HepG2 (cell line): ENCODE measurements at regions of chrX and their contacts with region 1.

Region 1: DNA sequence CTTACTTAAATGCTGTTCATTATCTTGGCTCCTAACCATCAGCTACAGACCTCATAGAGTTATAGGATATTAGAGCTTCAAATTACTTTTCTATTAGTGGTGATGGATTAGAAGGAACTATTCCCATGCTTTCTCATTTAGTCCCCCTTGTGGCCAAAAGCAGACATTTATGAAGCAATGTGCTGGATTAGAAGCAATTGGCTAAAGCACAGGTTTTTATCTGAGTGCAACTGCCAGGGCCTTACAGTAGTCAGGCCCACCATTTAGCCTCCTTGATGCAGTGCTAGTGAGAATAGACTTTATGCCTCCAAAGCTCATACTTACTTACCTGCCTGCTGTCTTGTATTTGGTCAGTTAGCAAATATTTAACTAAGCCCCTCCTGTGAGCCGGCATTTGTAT is 93.0 kb downstream of the TSPAN7 start:
- DNase-seq: peak; percentile 36
- ATAC-seq: peak; percentile 80
- H3K4me3 ChIP-seq: no peak overlapping the region
- H3K27ac ChIP-seq: no peak overlapping the region
- H3K4me1 ChIP-seq: peaks cover 40% of the 10 kb centered on the region
- H3K27me3 ChIP-seq: no peaks in the 10 kb centered on the region
- CTCF ChIP-seq: peak; percentile 15; the same call in 1 of the 2 replicates
- EP300 ChIP-seq: no peak
- POLR2A ChIP-seq: no peak
- RAD21 ChIP-seq: no peak

Region 2: GRCh38 chrX:38627683-38628082 is 26.6 kb before region 1 on chrX:
- CTCF ChIA-PET with region 1: interaction called, 3 read pairs
- POLR2A ChIA-PET with region 1: no interaction called
- in situ Hi-C with region 1: no loop called
- intact Hi-C with region 1: loop called (anchors 1 kb)
- DNase-seq: peak; percentile 45
- ATAC-seq: peak; percentile 99
- H3K4me3 ChIP-seq: no peak overlapping the region
- H3K27ac ChIP-seq: no peak overlapping the region
- H3K4me1 ChIP-seq: no peaks in the 10 kb centered on the region
- H3K27me3 ChIP-seq: no peaks in the 10 kb centered on the region
- CTCF ChIP-seq: peak; percentile 74
- EP300 ChIP-seq: no peak
- POLR2A ChIP-seq: no peak
- RAD21 ChIP-seq: peak; percentile 53

Region 3: DNA sequence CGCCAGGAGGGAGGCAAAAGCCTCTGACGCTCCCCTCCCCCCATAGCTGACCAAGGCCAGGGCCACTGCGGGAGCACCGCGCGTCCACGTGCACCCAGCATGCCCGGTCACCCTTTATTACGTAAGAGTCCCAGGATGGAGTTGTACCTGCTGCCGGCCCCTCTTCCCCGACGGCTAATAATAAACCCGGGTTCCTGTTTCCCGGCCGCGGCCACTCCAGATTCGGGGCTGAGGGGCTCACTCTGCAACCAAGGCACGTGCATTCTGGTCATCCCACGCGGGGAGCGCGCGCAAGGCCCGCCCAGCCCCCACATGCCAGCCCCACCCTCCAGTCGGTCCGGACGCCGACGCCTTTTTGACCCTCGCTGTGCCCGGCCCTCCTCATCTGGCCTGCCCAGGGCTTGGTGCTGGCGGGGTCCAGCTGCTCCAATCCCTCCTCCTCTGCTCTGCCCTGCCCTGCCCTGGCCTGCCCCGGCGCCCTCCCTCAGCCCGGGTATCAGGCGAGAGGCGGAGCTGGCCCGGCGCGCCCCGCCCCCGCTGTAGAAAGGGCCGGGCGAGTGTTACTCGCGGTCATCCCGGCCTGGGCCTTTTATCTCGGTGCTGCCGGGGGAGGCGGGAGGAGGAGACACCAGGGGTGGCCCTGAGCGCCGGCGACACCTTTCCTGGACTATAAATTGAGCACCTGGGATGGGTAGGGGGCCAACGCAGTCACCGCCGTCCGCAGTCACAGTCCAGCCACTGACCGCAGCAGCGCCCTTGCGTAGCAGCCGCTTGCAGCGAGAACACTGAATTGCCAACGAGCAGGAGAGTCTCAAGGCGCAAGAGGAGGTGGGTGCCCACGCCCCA is 149.5 kb after region 1 on chrX:
- CTCF ChIA-PET with region 1: no interaction called
- POLR2A ChIA-PET with region 1: no interaction called
- in situ Hi-C with region 1: no loop called
- intact Hi-C with region 1: no loop called
- DNase-seq: peak; percentile 72
- ATAC-seq: peak; percentile 88
- H3K4me3 ChIP-seq: peak overlapping the region; percentile 57 to 87 (median 84); a peak in 5 of 6 replicates
- H3K27ac ChIP-seq: peak overlapping the region; percentile 95
- H3K4me1 ChIP-seq: peaks cover 38% of the 10 kb centered on the region
- H3K27me3 ChIP-seq: no peaks in the 10 kb centered on the region; a peak in 1 of 5 replicates
- CTCF ChIP-seq: no peak
- EP300 ChIP-seq: peak; percentile 57 to 80; a peak in 2 of 4 replicates
- POLR2A ChIP-seq: peak in 1 of 2 experiments; percentile 96; a peak in 2 of 4 replicates
- RAD21 ChIP-seq: peak; percentile 38; the same call in 1 of the 2 replicates

Region 4: DNA sequence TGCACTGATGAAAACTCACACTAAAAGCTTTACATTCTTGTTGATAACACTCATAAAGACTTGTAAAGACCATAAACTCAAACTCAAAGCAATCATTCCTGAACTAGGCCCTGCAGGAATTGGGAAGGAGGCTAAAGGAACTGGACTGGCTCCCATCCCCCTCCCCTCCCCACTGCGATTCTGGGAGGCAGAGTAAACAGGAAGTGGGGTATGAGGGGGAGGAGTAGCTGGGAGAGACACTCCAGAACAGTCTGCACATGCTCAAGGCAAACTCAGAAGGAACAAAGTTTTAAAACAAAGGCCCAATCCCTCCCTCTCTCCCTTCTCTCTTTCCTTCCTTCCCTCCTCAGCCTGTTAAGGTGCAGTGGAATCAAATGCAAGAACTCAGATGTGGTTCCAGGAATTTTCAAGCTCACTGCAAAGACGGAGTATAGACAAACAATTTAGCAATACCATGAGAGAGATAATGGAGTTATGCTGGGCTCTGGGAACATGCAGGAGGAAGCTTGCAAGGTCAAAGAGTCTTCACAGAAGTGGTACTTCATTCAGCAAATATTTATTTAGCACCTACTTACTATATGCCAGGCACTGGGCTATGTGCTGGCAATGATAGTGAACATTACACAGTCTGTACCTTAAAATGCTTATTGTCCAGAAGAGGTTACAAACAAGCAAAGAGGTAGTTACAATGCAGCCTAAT is 162.9 kb after region 1 on chrX:
- CTCF ChIA-PET with region 1: no interaction called
- POLR2A ChIA-PET with region 1: no interaction called
- in situ Hi-C with region 1: no loop called
- intact Hi-C with region 1: no loop called
- DNase-seq: no peak
- ATAC-seq: no peak
- H3K4me3 ChIP-seq: no peak overlapping the region
- H3K27ac ChIP-seq: no peak overlapping the region
- H3K4me1 ChIP-seq: peaks cover 16% of the 10 kb centered on the region
- H3K27me3 ChIP-seq: no peaks in the 10 kb centered on the region
- CTCF ChIP-seq: no peak
- EP300 ChIP-seq: no peak
- POLR2A ChIP-seq: no peak
- RAD21 ChIP-seq: no peak